T-cell (primary cell): ENCODE measurements at regions of chr11 and their contacts with region 1.

Region 1: GRCh38 chr11:96389720-96390487 is at the starts of genes CCDC82 and JRKL:
- DNase-seq: peak; percentile 94 to 99 (median 97)
- ATAC-seq: peak; percentile 94 to 99 (median 97)
- H3K4me3 ChIP-seq: peak within 1 kb of the TSS; percentile 68 to 88
- H3K4me3 Mint-ChIP-seq: peak within 1 kb of the TSS; percentile 91 to 94 (median 93)
- H3K27ac ChIP-seq: peak within 1 kb of the TSS; percentile 68
- H3K27ac Mint-ChIP-seq: peak within 1 kb of the TSS; percentile 88 to 91
- H3K4me1 ChIP-seq: peaks cover 7 to 15% of the 10 kb centered on the region in 2 experiments
- H3K4me1 Mint-ChIP-seq: peaks cover 43 to 56% (median 53%) of the 10 kb centered on the region in 3 donors
- H3K27me3 ChIP-seq: no peaks in the 10 kb centered on the region
- H3K27me3 Mint-ChIP-seq: no peaks in the 10 kb centered on the region
- total RNA-seq, gene CCDC82: 28.9 to 37.1 (median 33.5) TPM
- total RNA-seq, gene JRKL: 4.8 to 15.6 (median 12.3) TPM

Region 2: GRCh38 chr11:95790123-95790932 is 599.6 kb before region 1 on chr11 and contains the start of gene CEP57:
- CTCF ChIA-PET with region 1: interaction called in 1 of 2 experiments, 12 read pairs
- POLR2A ChIA-PET with region 1: interaction called in 1 of 2 experiments, 21 read pairs
- DNase-seq: peak; percentile 86 to 98 (median 93)
- ATAC-seq: peak; percentile 67 to 70 (median 69)
- H3K4me3 ChIP-seq: peak within 1 kb of the TSS; percentile 92 to 95
- H3K4me3 Mint-ChIP-seq: peak within 1 kb of the TSS; percentile 96 to 99 (median 99)
- H3K27ac ChIP-seq: peak within 1 kb of the TSS; percentile 99
- H3K27ac Mint-ChIP-seq: peak within 1 kb of the TSS; percentile 100
- H3K4me1 ChIP-seq: peaks cover 19 to 23% of the 10 kb centered on the region in 2 experiments
- H3K4me1 Mint-ChIP-seq: peaks cover 56 to 69% (median 68%) of the 10 kb centered on the region in 3 donors
- H3K27me3 ChIP-seq: no peaks in the 10 kb centered on the region
- H3K27me3 Mint-ChIP-seq: no peaks in the 10 kb centered on the region
- total RNA-seq, gene CEP57: 57.6 to 69.6 (median 65.0) TPM

Region 3: GRCh38 chr11:95849087-95849825 is 540.6 kb before region 1 on chr11:
- CTCF ChIA-PET with region 1: interaction called, 8 to 14 read pairs
- POLR2A ChIA-PET with region 1: no interaction called
- DNase-seq: peak in 12 of 35 experiments; percentile 0 to 41 (median 4)
- ATAC-seq: peak; percentile 35 to 58 (median 51)
- H3K4me3 ChIP-seq: no peak overlapping the region
- H3K4me3 Mint-ChIP-seq: no peak overlapping the region
- H3K27ac ChIP-seq: no peak overlapping the region
- H3K27ac Mint-ChIP-seq: no peak overlapping the region
- H3K4me1 ChIP-seq: no peaks in the 10 kb centered on the region
- H3K4me1 Mint-ChIP-seq: no peaks in the 10 kb centered on the region
- H3K27me3 ChIP-seq: no peaks in the 10 kb centered on the region
- H3K27me3 Mint-ChIP-seq: no peaks in the 10 kb centered on the region

Region 4: GRCh38 chr11:96035031-96035739 is 354.7 kb before region 1 on chr11:
- CTCF ChIA-PET with region 1: interaction called in 1 of 2 experiments, 13 read pairs
- POLR2A ChIA-PET with region 1: no interaction called
- DNase-seq: no peak
- ATAC-seq: no peak
- H3K4me3 ChIP-seq: no peak overlapping the region
- H3K4me3 Mint-ChIP-seq: no peak overlapping the region
- H3K27ac ChIP-seq: no peak overlapping the region
- H3K27ac Mint-ChIP-seq: peak overlapping the region; percentile 33 to 66
- H3K4me1 ChIP-seq: peaks cover 0 to 3% of the 10 kb centered on the region in 2 experiments
- H3K4me1 Mint-ChIP-seq: peaks cover 54 to 68% (median 54%) of the 10 kb centered on the region in 3 donors
- H3K27me3 ChIP-seq: no peaks in the 10 kb centered on the region
- H3K27me3 Mint-ChIP-seq: no peaks in the 10 kb centered on the region

Region 5: DNA sequence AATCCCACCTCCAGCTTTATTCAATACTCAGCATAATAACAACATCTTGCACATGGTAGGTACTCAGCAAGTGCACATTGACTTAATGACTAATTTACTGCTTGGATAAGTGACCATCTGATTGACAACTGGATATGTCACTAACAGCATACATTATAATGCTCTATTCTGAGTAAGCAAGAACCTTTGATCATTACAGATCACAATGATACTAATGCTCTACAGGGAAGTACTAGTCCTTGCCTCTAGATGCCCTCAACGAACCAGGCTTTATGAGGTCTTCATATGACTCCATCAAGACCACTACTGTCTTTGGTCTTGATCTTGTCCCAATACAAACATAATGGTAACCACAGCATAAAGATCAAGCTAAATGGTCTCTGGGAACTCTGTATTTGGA is 298.4 kb before region 1 on chr11:
- CTCF ChIA-PET with region 1: interaction called in 1 of 2 experiments, 15 read pairs
- POLR2A ChIA-PET with region 1: interaction called, 3 to 5 read pairs
- DNase-seq: peak in 15 of 35 experiments; percentile 4 to 58 (median 20)
- ATAC-seq: peak; percentile 73 to 95 (median 91)
- H3K4me3 ChIP-seq: no peak overlapping the region
- H3K4me3 Mint-ChIP-seq: no peak overlapping the region
- H3K27ac ChIP-seq: no peak overlapping the region
- H3K27ac Mint-ChIP-seq: no peak overlapping the region
- H3K4me1 ChIP-seq: peaks cover 0 to 14% of the 10 kb centered on the region in 2 experiments
- H3K4me1 Mint-ChIP-seq: peaks cover 82 to 90% (median 86%) of the 10 kb centered on the region in 3 donors
- H3K27me3 ChIP-seq: no peaks in the 10 kb centered on the region
- H3K27me3 Mint-ChIP-seq: no peaks in the 10 kb centered on the region

Region 6: GRCh38 chr11:97069160-97069559 is 679.3 kb after region 1 on chr11:
- CTCF ChIA-PET with region 1: no interaction called
- POLR2A ChIA-PET with region 1: no interaction called
- DNase-seq: no peak
- ATAC-seq: no peak
- H3K4me3 ChIP-seq: no peak overlapping the region
- H3K4me3 Mint-ChIP-seq: no peak overlapping the region
- H3K27ac ChIP-seq: no peak overlapping the region
- H3K27ac Mint-ChIP-seq: no peak overlapping the region
- H3K4me1 ChIP-seq: no peaks in the 10 kb centered on the region
- H3K4me1 Mint-ChIP-seq: no peaks in the 10 kb centered on the region
- H3K27me3 ChIP-seq: no peaks in the 10 kb centered on the region
- H3K27me3 Mint-ChIP-seq: no peaks in the 10 kb centered on the region